ENCODE measurements at regions of chr7 and their contacts with region 1.

Region 1: DNA sequence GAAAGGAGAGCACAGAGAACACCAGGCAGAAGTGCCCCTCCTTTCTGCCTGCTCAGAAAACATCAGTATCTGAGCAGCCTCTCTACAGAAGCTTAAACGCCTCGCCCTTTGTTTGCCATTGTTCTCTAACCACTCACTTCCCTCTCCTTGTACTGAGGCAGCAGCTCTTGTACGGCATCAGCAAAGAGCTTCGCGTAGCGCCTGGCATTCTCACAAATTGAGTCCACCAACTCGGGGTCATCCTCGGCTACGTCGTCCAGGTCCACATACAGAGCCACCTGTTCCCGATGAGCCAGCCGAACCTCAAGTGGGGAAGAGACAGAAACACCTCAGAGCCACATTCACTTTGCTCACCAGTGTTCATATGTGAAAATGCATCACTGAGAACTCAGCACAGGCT is 1.7 kb downstream of the MCM7 start:
- DNase-seq: no peak
- H3K4me3 ChIP-seq: peak overlapping the region; percentile 85
- CTCF ChIP-seq: no peak

Region 2: DNA sequence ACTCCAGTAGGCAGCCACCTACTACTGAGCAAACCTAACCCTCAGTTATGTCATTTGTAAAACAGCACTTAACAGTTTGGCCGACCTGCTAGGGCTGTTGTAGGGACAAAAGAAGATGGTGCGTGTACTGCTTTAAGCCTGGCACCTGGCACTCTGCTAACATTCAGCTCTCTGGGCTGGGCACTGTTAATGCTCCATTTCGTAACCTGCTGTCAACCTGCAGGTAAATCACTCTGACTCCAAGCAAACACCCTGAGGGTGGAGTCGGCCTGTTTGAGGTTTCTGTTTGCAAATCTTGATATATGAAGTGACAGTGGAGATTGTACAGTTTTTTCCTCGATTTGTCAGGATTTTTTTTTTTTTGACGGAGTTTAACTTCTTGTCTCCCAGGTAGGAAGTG is 76.8 kb before region 1 on chr7:
- in situ Hi-C with region 1: no loop called
- DNase-seq: no peak
- H3K4me3 ChIP-seq: no peak overlapping the region
- CTCF ChIP-seq: no peak

Region 3: GRCh38 chr7:100034871-100035510 is 64.5 kb before region 1 on chr7:
- in situ Hi-C with region 1: loop called (anchors 5 kb)
- DNase-seq: peak; percentile 55
- H3K4me3 ChIP-seq: no peak overlapping the region
- CTCF ChIP-seq: no peak

Region 4: DNA sequence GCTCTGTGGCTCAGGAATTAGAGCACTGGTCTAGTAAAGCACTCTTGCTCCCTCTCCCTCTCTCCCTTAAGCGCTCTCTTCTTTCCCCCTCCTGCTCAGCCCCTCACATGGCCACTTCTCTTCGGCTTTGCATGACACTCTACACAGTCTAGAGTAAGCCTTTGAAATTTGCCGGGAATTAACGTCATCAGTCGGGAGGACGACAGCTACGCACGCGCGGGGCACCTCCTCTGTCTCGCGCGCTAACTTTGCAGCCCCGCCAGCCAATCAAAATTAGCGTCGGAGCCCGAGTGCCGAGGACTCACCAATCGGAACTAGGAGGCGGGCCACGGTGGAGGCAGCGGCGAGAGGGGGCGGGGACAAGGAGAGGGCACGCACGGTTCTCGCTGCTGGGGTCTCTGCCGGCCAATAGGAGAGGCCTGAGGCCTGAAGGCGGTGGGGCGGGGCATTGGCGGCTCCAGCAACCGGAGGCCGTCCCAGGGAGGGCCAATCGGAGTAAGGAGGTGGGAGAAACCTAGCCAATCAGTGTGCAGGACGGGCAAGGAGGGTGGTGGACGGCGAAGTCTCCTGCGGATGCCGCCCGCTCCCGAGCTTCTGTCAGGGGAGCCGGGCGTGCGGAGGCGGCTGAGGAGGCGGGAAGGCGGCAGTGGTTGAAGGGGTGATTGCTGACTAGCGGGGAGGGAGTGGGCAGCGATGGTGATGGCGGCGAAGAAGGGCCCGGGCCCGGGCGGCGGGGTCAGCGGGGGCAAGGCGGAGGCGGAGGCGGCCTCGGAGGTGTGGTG is 439.4 kb after region 1 on chr7 and contains the start of gene AGFG2:
- in situ Hi-C with region 1: no loop called
- DNase-seq: peak; percentile 99
- H3K4me3 ChIP-seq: peak within 1 kb of the TSS; percentile 67
- CTCF ChIP-seq: no peak

Measured in astrocyte of the cerebellum (primary cell).